ENCODE measurements at regions of chr3 and their contacts with region 1.

Region 1: DNA sequence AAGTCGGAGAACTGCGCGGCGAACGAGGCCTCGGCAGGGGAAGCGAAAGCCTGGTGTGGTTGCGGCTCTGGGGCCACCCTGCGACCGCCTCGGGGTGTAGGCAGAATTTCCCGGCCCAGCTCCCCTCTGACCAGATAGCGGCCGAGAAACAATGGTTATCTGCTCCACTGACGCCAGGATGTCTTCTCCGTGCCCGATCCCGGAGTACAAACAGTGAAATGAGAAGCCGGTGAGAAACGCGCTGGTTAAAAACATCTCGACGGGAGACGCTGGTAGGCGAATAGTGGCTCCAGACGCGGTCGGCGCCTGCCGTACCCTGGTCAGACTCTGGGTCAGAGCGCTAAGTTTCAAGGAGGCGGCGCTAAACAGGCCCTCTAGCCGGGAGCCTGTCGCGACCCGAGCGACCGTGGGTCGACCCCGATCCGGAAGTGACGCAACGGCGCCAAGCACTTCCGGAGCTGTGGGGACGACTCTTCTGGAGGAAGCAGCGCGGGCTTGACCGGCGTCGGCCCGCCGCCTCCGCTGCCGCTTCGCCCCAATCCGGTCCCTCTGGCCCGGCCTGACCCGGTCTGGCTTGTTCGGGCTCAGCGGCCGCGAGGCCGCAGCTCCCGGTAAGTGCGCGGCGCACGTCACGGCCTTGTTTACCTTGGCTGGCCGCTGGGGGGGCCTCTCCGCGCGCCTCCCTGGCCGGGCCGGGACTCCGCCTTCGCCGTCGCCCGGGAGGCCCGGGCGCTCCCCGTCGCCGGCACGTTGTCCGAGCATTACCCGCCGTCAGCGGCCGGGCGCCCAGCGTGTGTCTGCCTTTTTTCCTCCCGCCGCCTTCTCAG is at the start of gene ARIH2:
- DNase-seq: peak; percentile 87
- H3K4me3 Mint-ChIP-seq: peak within 1 kb of the TSS; percentile 92
- H3K27ac Mint-ChIP-seq: peak within 1 kb of the TSS; percentile 97
- H3K4me1 Mint-ChIP-seq: peaks cover 14% of the 10 kb centered on the region
- H3K27me3 Mint-ChIP-seq: no peaks in the 10 kb centered on the region
- total RNA-seq, gene ARIH2: 179 and 180 TPM in 2 replicates

Region 2: DNA sequence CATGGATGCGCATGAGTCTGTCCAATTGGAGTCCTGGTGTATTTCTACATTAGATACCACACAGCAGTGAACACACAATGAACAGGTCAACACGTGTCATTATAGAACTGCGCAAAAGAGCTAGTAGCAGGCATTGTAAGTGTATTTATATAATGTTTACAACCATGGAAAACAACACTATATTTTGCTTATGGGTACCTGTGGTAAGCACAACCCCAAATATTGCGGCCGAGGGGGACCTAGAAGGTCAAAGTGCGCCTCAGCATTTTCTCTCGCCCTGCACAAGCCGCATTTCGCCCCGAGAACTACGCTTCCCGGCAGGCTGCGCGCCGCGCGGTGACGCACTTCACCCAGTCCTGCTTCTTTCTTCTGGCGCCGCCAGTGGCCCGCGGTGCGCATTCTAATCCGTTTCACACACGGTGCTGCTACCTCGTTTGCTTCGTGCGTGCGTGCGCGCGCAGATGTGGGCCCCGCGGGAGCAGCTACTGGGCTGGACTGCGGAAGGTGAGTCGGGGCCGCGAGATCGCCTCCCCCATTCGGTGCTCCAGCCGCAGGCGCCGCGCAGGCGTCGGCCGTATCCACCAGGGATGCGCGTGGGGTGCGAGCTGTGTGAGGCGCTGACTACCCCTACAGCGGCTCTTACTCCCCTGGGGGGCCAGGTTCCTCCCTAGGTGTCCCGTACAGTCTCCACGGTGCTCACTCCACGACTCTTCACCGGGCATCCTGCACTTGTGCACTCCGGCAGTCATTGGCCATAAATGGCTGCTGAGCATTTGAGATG is 677.7 kb before region 1 on chr3 and contains the start of gene ZNF589:
- intact Hi-C with region 1: loop called (anchors 2 kb)
- DNase-seq: peak; percentile 93
- H3K4me3 Mint-ChIP-seq: peak within 1 kb of the TSS; percentile 91
- H3K27ac Mint-ChIP-seq: peak within 1 kb of the TSS; percentile 95
- H3K4me1 Mint-ChIP-seq: peaks cover 19% of the 10 kb centered on the region
- H3K27me3 Mint-ChIP-seq: no peaks in the 10 kb centered on the region
- total RNA-seq, gene ZNF589: 33.0 and 34.2 TPM in 2 replicates

Region 3: DNA sequence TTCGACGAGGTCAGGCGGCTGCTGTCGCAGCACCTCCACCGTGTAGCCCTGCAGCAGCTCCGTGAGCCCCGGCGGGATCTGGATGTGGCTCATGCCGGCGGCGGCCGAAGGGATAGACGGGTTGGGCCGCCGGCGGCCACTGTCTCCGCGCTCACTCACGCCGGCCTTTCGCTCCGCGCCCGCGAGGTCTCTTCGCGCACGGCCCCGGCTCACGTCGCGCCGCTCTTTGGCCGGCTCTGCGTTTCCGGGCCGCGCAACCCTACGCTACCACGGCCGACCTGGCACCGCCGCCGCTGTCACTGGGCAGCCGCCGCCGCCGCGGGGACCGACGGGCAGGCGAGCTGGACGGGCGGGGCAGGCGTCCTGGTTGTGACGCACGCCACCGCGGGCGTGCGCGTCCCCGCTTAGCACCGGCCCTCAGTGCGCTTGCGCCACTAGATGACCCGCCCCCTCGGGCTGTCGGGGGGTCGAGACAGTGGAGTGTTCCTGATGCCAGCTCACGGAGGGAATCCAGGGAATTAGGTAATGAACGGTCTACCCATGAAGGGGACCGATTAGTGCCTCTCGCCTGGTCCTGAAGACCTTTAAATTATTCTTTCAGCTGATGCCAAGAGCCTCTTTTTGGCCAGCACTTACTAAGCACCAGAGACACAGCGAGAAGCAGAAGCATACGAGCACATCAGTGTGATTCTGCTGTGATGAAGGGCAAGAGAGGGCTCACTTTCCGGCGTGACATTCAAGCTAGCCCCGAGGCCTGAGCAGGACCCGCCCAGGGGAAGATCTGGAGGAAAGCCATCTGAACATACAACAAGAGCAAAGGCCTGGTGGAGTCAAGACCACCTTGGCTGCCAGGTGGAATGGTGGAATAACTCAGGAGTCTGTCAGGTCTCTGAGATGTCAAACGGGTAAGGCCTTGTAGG is 70.8 kb before region 1 on chr3 and contains the start of gene PRKAR2A:
- intact Hi-C with region 1: loop called (anchors 1 kb)
- DNase-seq: peak; percentile 79
- H3K4me3 Mint-ChIP-seq: peak within 1 kb of the TSS; percentile 87
- H3K27ac Mint-ChIP-seq: peak within 1 kb of the TSS; percentile 71
- H3K4me1 Mint-ChIP-seq: peaks cover 22% of the 10 kb centered on the region
- H3K27me3 Mint-ChIP-seq: no peaks in the 10 kb centered on the region
- total RNA-seq, gene PRKAR2A: 34.7 and 38.8 TPM in 2 replicates

Region 4: DNA sequence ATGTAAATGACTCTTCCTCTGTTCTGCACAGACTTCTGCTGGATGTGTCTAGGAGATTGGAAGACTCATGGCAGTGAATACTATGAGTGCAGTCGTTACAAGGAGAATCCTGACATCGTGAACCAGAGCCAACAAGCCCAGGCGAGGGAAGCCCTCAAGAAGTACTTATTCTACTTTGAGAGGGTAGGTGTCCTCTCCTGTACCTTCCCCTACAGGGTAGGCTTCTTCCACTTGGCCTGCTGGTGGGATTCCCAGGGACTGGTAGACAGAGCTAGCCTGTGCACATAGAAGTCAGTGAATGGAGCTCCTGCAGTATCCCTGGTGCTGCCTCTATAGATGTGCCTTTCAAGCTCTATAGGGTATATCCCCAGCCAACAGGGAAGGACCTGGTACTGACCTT is 60.9 kb after region 1 on chr3:
- intact Hi-C with region 1: no loop called
- DNase-seq: no peak
- H3K4me3 Mint-ChIP-seq: no peak overlapping the region
- H3K27ac Mint-ChIP-seq: no peak overlapping the region
- H3K4me1 Mint-ChIP-seq: peaks cover 11% of the 10 kb centered on the region
- H3K27me3 Mint-ChIP-seq: no peaks in the 10 kb centered on the region

Region 5: GRCh38 chr3:48989796-48990635 is 71.4 kb after region 1 on chr3 and contains the start of gene P4HTM:
- intact Hi-C with region 1: loop called (anchors 2 kb)
- DNase-seq: peak; percentile 64
- H3K4me3 Mint-ChIP-seq: peak within 1 kb of the TSS; percentile 95
- H3K27ac Mint-ChIP-seq: peak within 1 kb of the TSS; percentile 91
- H3K4me1 Mint-ChIP-seq: peaks cover 49% of the 10 kb centered on the region
- H3K27me3 Mint-ChIP-seq: no peaks in the 10 kb centered on the region
- total RNA-seq, gene P4HTM: 34.5 and 36.8 TPM in 2 replicates

Region 6: DNA sequence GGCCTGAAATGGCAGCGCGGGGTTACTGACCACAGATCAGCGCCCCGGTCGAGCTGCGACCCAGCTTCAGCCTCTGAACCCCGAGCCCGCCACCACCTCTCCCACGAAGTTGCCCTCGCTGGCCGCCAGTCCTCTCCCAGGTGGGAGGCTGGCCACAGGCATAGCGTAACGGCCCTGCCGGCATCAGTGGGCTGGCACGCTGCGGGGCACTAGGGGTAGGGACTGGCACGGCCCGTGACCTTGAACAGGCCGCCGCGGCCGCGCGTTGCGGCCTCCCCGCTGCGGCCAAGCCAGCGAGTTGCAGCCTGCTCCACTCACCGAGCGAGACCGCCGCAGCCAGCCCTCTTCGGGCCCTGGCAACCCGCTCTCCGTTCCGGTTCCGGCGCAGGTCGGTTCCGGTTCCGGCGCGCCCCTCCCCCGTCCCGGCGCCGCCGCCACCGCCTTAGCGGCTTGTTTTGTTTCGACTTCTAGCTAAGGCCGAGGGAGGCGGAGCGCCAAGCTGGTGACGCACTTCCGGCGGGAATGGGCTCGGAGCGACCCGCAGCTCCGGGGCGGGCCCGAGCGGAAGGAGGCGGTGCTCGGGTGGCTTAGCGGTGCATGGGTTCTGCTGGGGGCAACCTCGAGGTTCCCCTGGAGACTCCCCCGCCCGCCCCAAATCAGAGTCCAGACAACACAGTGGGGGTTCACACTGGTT is 202.0 kb after region 1 on chr3 and contains the start of gene USP19:
- intact Hi-C with region 1: loop called (anchors 1 kb)
- DNase-seq: peak; percentile 94
- H3K4me3 Mint-ChIP-seq: peak within 1 kb of the TSS; percentile 90
- H3K27ac Mint-ChIP-seq: peak within 1 kb of the TSS; percentile 88
- H3K4me1 Mint-ChIP-seq: peaks cover 10% of the 10 kb centered on the region
- H3K27me3 Mint-ChIP-seq: peaks cover 1% of the 10 kb centered on the region
- total RNA-seq, gene USP19: 57.7 and 59.7 TPM in 2 replicates